ENCODE measurements at regions of chr17 and their contacts with region 1.

Region 1: GRCh38 chr17:5769593-5770354 is 185.5 kb upstream of the NLRP1 start:
- DNase-seq: no peak
- H3K4me3 ChIP-seq: no peak overlapping the region
- H3K27ac ChIP-seq: no peak overlapping the region
- H3K4me1 ChIP-seq: no peaks in the 10 kb centered on the region
- H3K27me3 ChIP-seq: peaks cover 26% of the 10 kb centered on the region
- CTCF ChIP-seq: no peak

Region 2: GRCh38 chr17:5699814-5700213 is 70.0 kb before region 1 on chr17:
- CTCF ChIA-PET with region 1: no interaction called
- dilution Hi-C with region 1: loop called (anchors 5 kb)
- in situ Hi-C with region 1: no loop called
- intact Hi-C with region 1: no loop called
- DNase-seq: no peak
- H3K4me3 ChIP-seq: no peak overlapping the region
- H3K27ac ChIP-seq: no peak overlapping the region
- H3K4me1 ChIP-seq: no peaks in the 10 kb centered on the region
- H3K27me3 ChIP-seq: peaks cover 2% of the 10 kb centered on the region
- CTCF ChIP-seq: no peak

Measured in mammary epithelial cell (primary cell).